ENCODE measurements at regions of chr2 and their contacts with region 1.

Region 1: DNA sequence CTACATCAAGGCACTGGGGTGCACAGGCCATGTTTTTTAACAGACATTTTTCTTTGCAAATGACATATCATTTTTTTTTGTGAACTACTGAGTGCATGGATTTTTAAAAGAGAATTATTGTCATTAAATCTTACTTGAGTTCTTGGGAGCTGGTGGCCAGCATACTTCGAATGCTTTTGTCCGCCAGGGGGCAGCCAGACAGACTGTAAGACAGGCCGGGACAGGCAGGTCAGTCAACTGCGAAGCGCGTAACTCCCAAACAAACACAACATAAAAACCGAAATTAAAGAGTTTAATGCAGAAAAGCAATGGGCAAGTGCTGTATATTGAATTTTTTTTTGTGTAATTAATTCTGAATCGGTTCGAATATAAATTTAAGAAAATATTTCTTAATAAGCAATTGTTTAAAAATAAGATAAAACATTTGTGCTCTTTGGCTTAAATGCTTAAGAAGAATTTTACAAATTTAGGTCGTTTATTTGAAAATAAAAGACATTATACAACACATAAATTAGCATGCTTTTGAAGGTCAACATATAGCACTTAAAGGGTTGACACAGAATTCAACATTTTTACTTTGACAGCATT is 142.2 kb upstream of the PXDN start:
- DNase-seq: peak in 1 of 2 experiments; percentile 86
- H3K4me3 ChIP-seq: no peak overlapping the region
- H3K27ac ChIP-seq: no peak overlapping the region
- H3K4me1 ChIP-seq: no peaks in the 10 kb centered on the region
- H3K27me3 ChIP-seq: peaks cover 0 to 3% (median 0%) of the 10 kb centered on the region in 4 experiments; a peak in 2 of 7 replicates
- CTCF ChIP-seq: peak; percentile 73 to 79 (median 74)
- EP300 ChIP-seq: no peak
- POLR2A ChIP-seq: no peak
- RAD21 ChIP-seq: peak; percentile 63 to 74

Region 2: DNA sequence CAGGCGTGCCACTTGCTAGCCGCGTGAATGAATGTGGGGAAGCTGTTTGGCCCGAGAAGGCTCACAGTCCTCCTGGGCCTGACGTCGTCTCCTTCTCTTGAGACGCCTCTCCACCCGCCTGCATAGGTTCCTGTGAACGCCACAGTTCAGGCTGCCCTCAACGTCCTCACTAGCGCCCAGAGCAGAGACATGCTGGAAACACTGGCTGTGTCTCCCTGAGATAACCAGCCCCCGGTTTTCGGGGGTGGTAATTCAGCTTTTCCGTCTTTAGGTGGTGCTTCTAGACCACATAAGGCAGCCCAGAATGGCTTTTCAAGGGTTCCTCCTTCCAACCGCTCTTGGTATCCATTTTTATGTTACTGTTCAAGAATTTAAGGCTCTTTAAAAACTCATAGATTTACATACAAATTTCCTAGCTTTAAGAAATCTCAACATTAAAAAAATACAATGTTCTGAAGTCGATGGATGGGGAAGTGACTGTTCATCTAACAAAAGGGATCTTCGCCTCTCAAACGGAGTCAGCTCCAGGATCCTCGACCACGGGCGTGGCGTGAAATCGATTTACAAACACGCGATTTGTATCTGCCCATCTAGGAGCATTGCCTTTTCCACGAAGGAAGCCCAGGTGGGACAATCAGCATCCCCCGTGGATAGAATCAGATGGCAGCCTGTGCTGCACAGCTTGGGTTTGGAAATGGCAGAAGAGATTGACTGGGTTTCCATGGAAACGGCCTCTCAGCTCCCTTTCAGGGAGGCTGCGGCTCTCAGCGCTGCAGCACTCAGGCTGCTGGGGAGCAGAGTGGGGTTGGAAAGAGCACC is 31.6 kb before region 1 on chr2:
- CTCF ChIA-PET with region 1: interaction called, 22 read pairs
- POLR2A ChIA-PET with region 1: no interaction called
- DNase-seq: peak; percentile 34 to 75
- H3K4me3 ChIP-seq: peak overlapping the region; percentile 26 to 57 (median 36); a peak in 5 of 8 replicates
- H3K27ac ChIP-seq: no peak overlapping the region
- H3K4me1 ChIP-seq: peaks cover 0 to 2% (median under 1%) of the 10 kb centered on the region in 4 experiments; a peak in 1 of 7 replicates
- H3K27me3 ChIP-seq: no peaks in the 10 kb centered on the region; a peak in 1 of 7 replicates
- CTCF ChIP-seq: peak; percentile 44 to 76 (median 65)
- EP300 ChIP-seq: no peak
- POLR2A ChIP-seq: no peak
- RAD21 ChIP-seq: peak; percentile 93

Region 3: DNA sequence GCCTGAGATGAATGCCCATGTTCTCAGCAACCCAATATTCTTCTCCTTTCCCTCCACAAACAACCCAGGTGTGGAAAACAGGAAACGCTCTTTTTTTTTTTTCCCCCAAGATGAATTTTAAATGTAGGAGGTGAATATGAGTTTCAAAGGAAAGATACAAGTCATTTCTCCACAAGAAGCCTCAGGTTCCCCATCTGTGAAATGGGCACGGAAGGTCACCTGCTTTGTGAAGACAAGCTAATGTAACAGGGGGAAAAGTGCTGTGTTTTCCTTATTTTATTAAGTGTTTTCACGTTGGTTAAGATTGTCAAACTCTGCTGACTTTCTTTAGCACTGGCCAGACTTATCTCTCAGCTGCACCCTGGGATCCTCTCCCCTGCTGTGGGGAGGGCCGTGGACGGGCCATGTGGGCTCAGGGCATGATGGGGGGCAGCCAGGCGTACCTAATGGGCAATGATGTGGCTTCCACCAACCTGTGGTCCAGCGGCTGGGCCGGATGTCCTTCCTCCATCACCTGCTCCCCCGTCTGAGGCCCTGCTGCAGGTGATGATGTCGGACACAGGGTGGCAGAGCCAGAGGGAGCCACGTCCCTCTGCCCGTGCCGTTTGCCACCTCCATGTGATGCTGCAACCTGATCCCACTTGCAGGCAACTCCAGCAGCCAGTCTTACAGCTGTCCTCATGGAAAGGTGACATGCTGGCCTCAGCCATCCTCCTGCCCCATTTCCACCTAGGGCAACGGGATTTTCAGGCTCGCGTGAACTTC is 12.2 kb before region 1 on chr2:
- CTCF ChIA-PET with region 1: interaction called, 25 read pairs
- POLR2A ChIA-PET with region 1: interaction called, 3 read pairs
- DNase-seq: no peak
- H3K4me3 ChIP-seq: no peak overlapping the region
- H3K27ac ChIP-seq: no peak overlapping the region
- H3K4me1 ChIP-seq: no peaks in the 10 kb centered on the region; a peak in 1 of 7 replicates
- H3K27me3 ChIP-seq: peaks cover 0 to 3% (median 1%) of the 10 kb centered on the region in 4 experiments; a peak in 1 of 7 replicates
- CTCF ChIP-seq: peak in 1 of 3 experiments; percentile 4; a peak in 1 of 4 replicates
- EP300 ChIP-seq: no peak
- POLR2A ChIP-seq: no peak
- RAD21 ChIP-seq: no peak

Region 4: DNA sequence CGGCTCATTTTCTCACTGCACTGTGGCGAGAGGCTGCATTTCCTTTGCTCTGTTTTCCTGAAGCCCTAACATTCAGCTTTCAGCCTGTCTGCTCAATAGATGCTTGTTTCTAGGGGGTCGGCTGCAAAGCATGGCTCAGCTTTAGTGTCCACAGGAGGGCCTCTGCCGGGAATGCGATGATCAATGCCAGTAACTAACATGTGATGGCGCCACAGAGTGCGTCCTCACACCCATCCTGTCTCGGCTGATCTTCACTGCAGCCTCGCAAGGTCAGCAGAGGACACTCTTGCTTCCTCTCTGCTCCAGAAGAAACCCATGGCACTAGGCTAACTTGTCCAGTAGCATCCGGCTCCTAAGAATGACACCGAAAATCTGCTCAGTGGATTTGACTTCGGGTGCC is 14.2 kb after region 1 on chr2:
- CTCF ChIA-PET with region 1: interaction called, 111 read pairs
- POLR2A ChIA-PET with region 1: no interaction called
- DNase-seq: peak; percentile 59 to 72
- H3K4me3 ChIP-seq: no peak overlapping the region
- H3K27ac ChIP-seq: no peak overlapping the region
- H3K4me1 ChIP-seq: no peaks in the 10 kb centered on the region
- H3K27me3 ChIP-seq: no peaks in the 10 kb centered on the region
- CTCF ChIP-seq: peak; percentile 96 to 99 (median 97)
- EP300 ChIP-seq: no peak
- POLR2A ChIP-seq: no peak
- RAD21 ChIP-seq: peak; percentile 80 to 83

Region 5: DNA sequence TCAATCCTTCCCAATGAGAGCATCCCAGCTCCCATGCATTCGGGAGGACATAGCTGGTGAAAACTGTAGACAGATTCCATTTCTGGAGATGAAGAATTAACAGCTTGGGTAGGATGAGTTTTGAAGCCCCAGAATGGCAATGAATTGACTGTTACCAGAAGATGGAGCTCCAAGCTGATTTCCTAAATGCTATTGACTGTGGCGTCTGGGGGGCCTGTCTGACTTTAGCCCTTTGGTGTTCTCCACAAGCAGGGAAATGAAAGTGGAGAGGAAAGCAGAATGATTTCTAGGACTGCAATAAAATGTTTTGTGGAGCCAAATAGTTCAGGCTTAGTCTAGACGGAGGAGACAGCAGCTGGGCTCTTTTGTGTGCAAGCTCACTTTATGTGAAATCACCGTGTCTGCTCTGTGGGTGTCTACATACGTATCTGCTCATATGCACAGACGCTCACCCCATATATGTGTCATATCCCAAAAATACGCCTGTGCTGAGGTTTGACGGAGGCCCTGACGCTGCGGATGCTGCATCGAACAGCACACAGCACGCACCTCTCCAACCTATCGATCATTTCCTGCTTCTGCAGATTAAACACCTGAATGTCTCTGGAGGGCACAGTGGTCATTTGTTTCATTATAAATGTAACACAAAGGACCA is 24.2 kb after region 1 on chr2:
- CTCF ChIA-PET with region 1: interaction called, 28 read pairs
- POLR2A ChIA-PET with region 1: no interaction called
- DNase-seq: no peak
- H3K4me3 ChIP-seq: no peak overlapping the region
- H3K27ac ChIP-seq: no peak overlapping the region
- H3K4me1 ChIP-seq: no peaks in the 10 kb centered on the region
- H3K27me3 ChIP-seq: no peaks in the 10 kb centered on the region
- CTCF ChIP-seq: peak in 2 of 3 experiments; percentile 39 to 54; a peak in 3 of 4 replicates
- EP300 ChIP-seq: no peak
- POLR2A ChIP-seq: no peak
- RAD21 ChIP-seq: peak; percentile 72 to 81

Region 6: DNA sequence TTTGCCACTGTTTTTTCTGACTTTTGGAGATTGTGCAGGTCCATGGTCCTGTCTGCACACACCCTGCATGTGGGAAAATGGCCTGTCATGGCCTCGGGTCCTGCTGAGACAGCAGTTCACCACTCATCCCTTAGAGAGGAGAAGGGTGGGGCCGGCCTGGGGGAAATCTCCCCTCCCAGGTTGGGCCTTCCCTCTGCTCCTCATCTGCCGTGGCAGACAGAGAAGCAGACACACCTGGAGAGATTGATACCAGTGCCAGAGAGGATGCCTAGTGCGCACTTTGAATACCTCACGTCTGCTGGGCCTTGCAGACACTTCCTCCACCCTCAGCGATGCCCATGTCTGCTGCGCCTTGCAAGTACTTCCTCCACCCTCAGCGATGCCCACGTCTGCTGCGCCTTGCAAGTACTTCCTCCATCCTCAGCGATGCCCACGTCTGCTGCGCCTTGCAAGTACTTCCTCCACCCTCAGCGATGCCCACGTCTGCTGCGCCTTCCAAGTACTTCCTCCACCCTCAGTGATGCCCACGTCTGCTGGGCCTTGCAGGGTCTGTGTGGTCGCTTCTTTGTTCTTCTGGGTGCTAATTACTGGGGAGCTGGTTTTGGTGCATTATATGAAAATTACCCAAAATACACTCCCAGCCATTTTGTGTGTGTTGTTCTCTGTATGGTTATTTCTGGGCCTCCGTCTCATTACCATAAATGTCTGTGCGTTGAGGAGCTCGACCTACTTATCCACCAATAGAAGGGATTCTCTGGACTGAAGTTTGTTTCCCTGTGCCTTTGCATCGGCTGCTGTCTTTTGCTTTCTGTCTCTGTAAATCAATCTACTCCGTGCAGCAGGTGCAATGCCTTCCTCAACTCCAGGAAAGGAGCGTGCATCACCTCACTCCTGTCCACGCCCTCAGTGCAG is 44.8 kb after region 1 on chr2:
- CTCF ChIA-PET with region 1: no interaction called
- POLR2A ChIA-PET with region 1: no interaction called
- DNase-seq: peak in 1 of 2 experiments; percentile 38
- H3K4me3 ChIP-seq: no peak overlapping the region
- H3K27ac ChIP-seq: no peak overlapping the region
- H3K4me1 ChIP-seq: peaks cover 0 to under 1% (median under 1%) of the 10 kb centered on the region in 4 experiments; a peak in 1 of 7 replicates
- H3K27me3 ChIP-seq: no peaks in the 10 kb centered on the region
- CTCF ChIP-seq: no peak
- EP300 ChIP-seq: no peak
- POLR2A ChIP-seq: no peak
- RAD21 ChIP-seq: no peak

Region 7: DNA sequence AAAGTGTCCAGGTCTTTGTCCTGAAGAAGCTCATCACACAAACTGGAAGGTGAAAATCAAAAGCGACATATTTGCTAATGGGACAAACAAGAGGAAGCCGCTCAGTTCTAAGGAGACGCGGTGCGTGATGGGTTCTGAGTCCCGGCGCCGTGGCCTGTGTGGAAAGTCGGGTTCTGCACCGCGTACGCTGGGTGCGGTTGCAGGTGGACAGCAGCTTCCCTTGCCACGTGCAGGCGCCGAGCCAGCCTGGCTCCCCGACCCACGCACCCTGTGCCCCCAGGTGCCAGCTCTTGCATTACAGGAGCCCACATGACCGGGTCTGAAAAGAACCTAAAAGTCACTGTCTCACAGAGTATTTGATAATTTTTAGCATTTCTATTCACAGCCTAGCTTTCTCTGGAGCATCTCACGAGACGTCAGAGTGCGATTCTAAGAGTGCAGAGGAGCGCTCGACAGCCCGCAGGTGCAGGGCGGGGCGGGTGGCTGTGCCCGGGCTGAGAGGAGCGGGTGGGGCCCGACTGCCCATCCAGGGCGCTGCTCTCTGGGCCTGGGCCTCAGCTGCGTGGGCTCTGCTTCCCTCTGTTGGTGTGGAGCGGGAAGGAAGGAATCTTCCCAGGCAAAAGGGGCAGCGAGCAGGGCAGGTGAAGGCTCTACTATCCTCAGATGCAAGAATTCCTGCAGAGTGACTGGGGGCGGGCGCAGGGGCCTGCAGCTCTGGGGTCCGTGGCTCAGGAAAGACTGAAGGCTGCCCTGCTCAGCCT is 405.2 kb after region 1 on chr2:
- CTCF ChIA-PET with region 1: interaction called, 10 read pairs
- POLR2A ChIA-PET with region 1: no interaction called
- DNase-seq: peak; percentile 43 to 76
- H3K4me3 ChIP-seq: no peak overlapping the region
- H3K27ac ChIP-seq: no peak overlapping the region
- H3K4me1 ChIP-seq: peaks cover 0 to 2% (median 0%) of the 10 kb centered on the region in 4 experiments; a peak in 1 of 7 replicates
- H3K27me3 ChIP-seq: no peaks in the 10 kb centered on the region; a peak in 1 of 7 replicates
- CTCF ChIP-seq: peak; percentile 84 to 86 (median 85)
- EP300 ChIP-seq: no peak
- POLR2A ChIP-seq: no peak
- RAD21 ChIP-seq: peak; percentile 92 to 95